ENCODE measurements at regions of chr22 and their contacts with region 1.

Region 1: GRCh38 chr22:19178656-19179496 is at the start of gene SLC25A1:
- DNase-seq: peak; percentile 91 to 96 (median 95)
- H3K4me3 ChIP-seq: peak within 1 kb of the TSS; percentile 86
- H3K27ac ChIP-seq: peak within 1 kb of the TSS; percentile 80 to 91
- H3K4me1 ChIP-seq: peaks cover 5% of the 10 kb centered on the region
- H3K27me3 ChIP-seq: no peaks in the 10 kb centered on the region
- CTCF ChIP-seq: no peak
- EP300 ChIP-seq: no peak
- POLR2A ChIP-seq: peak; percentile 68
- total RNA-seq, gene SLC25A1: 36.0 to 90.7 (median 76.4) TPM

Region 2: DNA sequence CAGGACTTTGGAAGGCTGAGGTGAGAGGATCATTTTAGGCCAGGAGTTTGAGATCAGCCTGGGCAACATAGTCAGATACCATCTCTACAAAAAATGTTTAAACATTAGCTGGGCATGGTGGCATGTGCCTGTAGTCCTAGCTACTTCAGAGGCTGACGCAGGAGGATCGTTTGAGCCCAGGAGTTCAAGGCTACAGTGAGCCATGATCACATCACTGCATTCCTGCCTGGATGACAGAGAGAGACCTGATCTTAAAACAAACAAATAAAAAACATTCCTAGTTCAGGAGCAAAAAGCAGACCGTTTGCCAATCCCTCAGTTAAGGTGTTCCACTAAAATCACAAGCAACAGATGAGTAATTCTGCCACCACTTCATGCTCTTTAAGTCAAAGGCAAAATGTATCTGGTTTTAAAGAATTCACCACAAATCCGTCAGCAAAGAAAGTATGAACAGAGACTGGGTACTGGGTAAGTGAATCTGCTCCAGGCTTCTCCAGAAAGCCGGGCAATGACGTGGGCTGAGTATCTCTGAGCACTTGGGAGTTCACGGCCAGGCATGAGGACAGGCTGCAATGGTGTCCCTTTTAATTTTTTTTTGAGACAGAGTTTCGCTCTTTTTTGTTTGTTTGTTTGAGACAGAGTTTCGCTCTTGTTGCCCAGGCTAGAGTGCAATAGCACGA is 93.1 kb after region 1 on chr22:
- intact Hi-C with region 1: no loop called
- DNase-seq: no peak
- H3K4me3 ChIP-seq: no peak overlapping the region
- H3K27ac ChIP-seq: no peak overlapping the region
- H3K4me1 ChIP-seq: peaks cover 5% of the 10 kb centered on the region
- H3K27me3 ChIP-seq: no peaks in the 10 kb centered on the region
- CTCF ChIP-seq: no peak
- EP300 ChIP-seq: no peak
- POLR2A ChIP-seq: no peak

Region 3: GRCh38 chr22:19291580-19292457 is 112.9 kb after region 1 on chr22 and contains the start of gene CLTCL1:
- intact Hi-C with region 1: loop called in 1 of 4 experiments (anchors 5 kb)
- DNase-seq: peak; percentile 82 to 89 (median 87)
- H3K4me3 ChIP-seq: peak within 1 kb of the TSS; percentile 72
- H3K27ac ChIP-seq: peak within 1 kb of the TSS; percentile 13 to 61
- H3K4me1 ChIP-seq: no peaks in the 10 kb centered on the region
- H3K27me3 ChIP-seq: no peaks in the 10 kb centered on the region
- CTCF ChIP-seq: no peak
- EP300 ChIP-seq: no peak
- POLR2A ChIP-seq: no peak
- total RNA-seq, gene CLTCL1: 2.8 to 8.9 (median 5.2) TPM

Region 4: DNA sequence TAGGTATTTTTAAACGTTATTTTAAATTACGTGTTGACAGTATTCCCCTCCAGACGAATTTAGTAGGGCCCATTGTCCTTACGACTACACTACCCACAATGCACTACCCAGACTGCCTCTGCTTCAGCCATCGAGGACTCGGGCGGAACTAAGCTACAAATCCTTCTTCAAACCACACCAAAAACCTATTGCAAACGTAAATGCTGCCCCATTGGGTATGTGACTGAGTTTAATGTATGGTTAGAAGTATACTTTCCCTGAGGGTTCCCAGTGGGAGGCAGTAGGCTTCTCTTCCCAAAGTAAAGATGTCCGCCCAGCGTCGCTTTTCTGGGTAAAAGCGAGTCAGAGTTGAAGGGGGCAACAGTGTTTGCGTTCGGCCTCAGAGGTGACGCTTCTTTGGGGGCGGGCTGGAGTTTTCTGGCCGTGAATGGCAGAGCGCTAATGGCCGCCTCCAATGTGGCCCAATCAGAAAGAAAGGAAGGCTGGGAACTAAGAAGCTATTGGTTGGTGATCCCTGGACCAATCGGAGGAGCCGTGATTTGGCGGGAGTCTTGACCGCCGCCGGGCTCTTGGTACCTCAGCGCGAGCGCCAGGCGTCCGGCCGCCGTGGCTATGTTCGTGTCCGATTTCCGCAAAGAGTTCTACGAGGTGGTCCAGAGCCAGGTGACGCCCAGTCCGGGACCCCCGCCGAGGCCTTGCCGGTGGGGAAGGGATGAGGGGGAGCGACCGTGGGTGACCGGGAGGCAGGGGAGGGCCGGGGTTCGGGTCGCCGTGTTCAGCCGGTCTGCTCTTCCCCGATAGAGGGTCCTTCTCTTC is 300.7 kb after region 1 on chr22 and contains the start of gene CDC45:
- intact Hi-C with region 1: loop called in 1 of 4 experiments (anchors 10 kb)
- DNase-seq: peak; percentile 93 to 95 (median 94)
- H3K4me3 ChIP-seq: peak within 1 kb of the TSS; percentile 76
- H3K27ac ChIP-seq: peak within 1 kb of the TSS; percentile 79 to 93
- H3K4me1 ChIP-seq: peaks cover 7% of the 10 kb centered on the region
- H3K27me3 ChIP-seq: no peaks in the 10 kb centered on the region
- CTCF ChIP-seq: peak in 1 of 3 donors; percentile 17
- EP300 ChIP-seq: no peak
- POLR2A ChIP-seq: no peak
- total RNA-seq, gene CDC45: 0.87 to 2.2 (median 1.1) TPM in 4 of 7 donors, not detected in the others

Measured in ovary (tissue), 10 donors.